Endothelial cell of umbilical vein (primary cell): ENCODE measurements at regions of chr12 and their contacts with region 1.

Region 1: GRCh38 chr12:80472902-80473500 is 29.0 kb downstream of the PTPRQ start:
- DNase-seq: peak; percentile 65
- H3K4me3 ChIP-seq: no peak overlapping the region
- H3K27ac ChIP-seq: no peak overlapping the region
- H3K4me1 ChIP-seq: no peaks in the 10 kb centered on the region
- H3K27me3 ChIP-seq: no peaks in the 10 kb centered on the region
- CTCF ChIP-seq: peak; percentile 31 to 49
- POLR2A ChIP-seq: no peak

Region 2: GRCh38 chr12:79997096-79997791 is 475.8 kb before region 1 on chr12:
- CTCF ChIA-PET with region 1: no interaction called
- POLR2A ChIA-PET with region 1: no interaction called
- dilution Hi-C with region 1: no loop called
- intact Hi-C with region 1: no loop called
- DNase-seq: no peak
- H3K4me3 ChIP-seq: no peak overlapping the region
- H3K27ac ChIP-seq: no peak overlapping the region
- H3K4me1 ChIP-seq: no peaks in the 10 kb centered on the region
- H3K27me3 ChIP-seq: peaks cover 0 to 4% of the 10 kb centered on the region in 2 experiments
- CTCF ChIP-seq: no peak
- POLR2A ChIP-seq: no peak

Region 3: GRCh38 chr12:80432055-80432454 is 40.9 kb before region 1 on chr12:
- CTCF ChIA-PET with region 1: no interaction called
- POLR2A ChIA-PET with region 1: no interaction called
- dilution Hi-C with region 1: no loop called
- intact Hi-C with region 1: no loop called
- DNase-seq: no peak
- H3K4me3 ChIP-seq: no peak overlapping the region
- H3K27ac ChIP-seq: no peak overlapping the region
- H3K4me1 ChIP-seq: no peaks in the 10 kb centered on the region
- H3K27me3 ChIP-seq: no peaks in the 10 kb centered on the region
- CTCF ChIP-seq: no peak
- POLR2A ChIP-seq: no peak

Region 4: GRCh38 chr12:80598004-80598606 is 125.1 kb after region 1 on chr12:
- CTCF ChIA-PET with region 1: interaction called, 13 read pairs
- POLR2A ChIA-PET with region 1: no interaction called
- dilution Hi-C with region 1: no loop called
- intact Hi-C with region 1: loop called (anchors 1 kb)
- DNase-seq: peak; percentile 55
- H3K4me3 ChIP-seq: no peak overlapping the region
- H3K27ac ChIP-seq: no peak overlapping the region
- H3K4me1 ChIP-seq: no peaks in the 10 kb centered on the region
- H3K27me3 ChIP-seq: no peaks in the 10 kb centered on the region
- CTCF ChIP-seq: peak in 1 of 2 donors; percentile 23
- POLR2A ChIP-seq: no peak

Region 5: DNA sequence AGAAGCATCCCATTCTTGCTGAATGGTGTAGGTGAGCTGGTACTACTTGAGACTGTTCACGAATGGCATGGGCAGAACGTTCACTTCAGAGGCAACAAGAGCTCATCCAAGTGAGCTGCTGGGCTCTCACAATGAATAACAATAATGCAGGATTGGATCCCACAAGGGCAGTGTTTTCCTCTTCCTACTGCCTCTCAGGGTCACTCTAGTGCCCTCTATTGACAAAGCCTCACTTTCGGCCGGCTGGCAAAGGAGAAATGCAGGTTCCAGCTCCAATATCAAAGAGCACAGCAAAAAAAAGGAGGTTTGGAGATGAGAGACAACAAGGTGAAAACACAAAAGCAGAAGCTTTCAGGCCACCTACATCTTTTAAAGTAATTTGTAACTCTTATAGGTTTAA is 159.8 kb after region 1 on chr12:
- CTCF ChIA-PET with region 1: no interaction called
- POLR2A ChIA-PET with region 1: no interaction called
- dilution Hi-C with region 1: no loop called
- intact Hi-C with region 1: no loop called
- DNase-seq: no peak
- H3K4me3 ChIP-seq: no peak overlapping the region
- H3K27ac ChIP-seq: no peak overlapping the region
- H3K4me1 ChIP-seq: no peaks in the 10 kb centered on the region
- H3K27me3 ChIP-seq: no peaks in the 10 kb centered on the region
- CTCF ChIP-seq: peak; percentile 14 to 16
- POLR2A ChIP-seq: no peak

Region 6: GRCh38 chr12:80763874-80764273 is 290.9 kb after region 1 on chr12:
- CTCF ChIA-PET with region 1: interaction called, 29 read pairs
- POLR2A ChIA-PET with region 1: no interaction called
- dilution Hi-C with region 1: no loop called
- intact Hi-C with region 1: loop called (anchors 1 kb)
- DNase-seq: peak; percentile 73
- H3K4me3 ChIP-seq: no peak overlapping the region
- H3K27ac ChIP-seq: no peak overlapping the region
- H3K4me1 ChIP-seq: no peaks in the 10 kb centered on the region
- H3K27me3 ChIP-seq: no peaks in the 10 kb centered on the region
- CTCF ChIP-seq: peak; percentile 28 to 38
- POLR2A ChIP-seq: no peak

Region 7: GRCh38 chr12:80946594-80946993 is 473.6 kb after region 1 on chr12:
- CTCF ChIA-PET with region 1: no interaction called
- POLR2A ChIA-PET with region 1: no interaction called
- dilution Hi-C with region 1: no loop called
- intact Hi-C with region 1: loop called (anchors 10 kb)
- DNase-seq: peak; percentile 5
- H3K4me3 ChIP-seq: no peak overlapping the region
- H3K27ac ChIP-seq: no peak overlapping the region
- H3K4me1 ChIP-seq: no peaks in the 10 kb centered on the region
- H3K27me3 ChIP-seq: no peaks in the 10 kb centered on the region
- CTCF ChIP-seq: no peak
- POLR2A ChIP-seq: no peak